Vagina (tissue), 2 donors: ENCODE measurements at regions of chr2 and their contacts with region 1.

Region 1: DNA sequence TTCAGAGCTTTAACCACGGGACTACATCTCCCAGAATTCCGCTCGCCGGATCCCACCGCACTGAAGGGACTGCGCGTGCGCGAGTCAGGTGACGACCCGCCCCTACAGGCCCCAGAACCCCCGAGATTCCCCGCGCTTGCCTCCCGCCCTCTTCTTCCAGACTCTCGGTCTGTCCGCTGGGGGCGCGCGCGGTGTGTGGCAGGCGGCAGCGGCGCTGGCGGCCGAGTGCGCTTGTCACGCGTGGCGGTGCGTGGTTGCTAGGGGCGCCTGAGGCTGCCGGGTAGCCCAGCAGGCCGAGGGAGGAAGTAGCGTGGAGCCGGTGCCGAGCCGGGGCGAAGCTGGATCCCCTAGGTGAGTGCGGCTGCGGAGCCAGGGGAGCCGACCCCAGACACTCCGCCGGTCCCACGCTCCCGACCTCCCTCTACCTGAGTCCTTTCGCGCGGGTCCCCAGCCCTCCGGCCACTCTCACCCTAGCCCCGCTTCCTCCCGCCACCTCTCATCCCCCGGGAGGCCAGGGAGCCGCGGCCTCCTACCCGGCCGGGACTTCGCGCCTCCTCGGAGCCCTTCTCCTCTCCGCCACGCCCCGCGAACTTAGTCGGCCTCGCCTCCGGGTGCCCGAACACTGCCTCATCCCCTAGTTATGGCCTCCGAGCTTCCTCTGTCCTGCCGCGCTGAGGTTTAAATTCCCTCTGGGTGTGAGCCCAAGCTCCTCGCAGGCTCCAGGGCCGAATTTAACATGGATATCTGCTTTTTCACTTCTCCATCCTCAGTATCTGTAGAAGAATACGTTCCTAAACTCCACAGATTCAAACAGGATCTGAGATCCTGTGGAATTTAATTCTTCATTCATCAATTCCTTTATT is at the start of gene TTLL4:
- DNase-seq: peak; percentile 96 to 98
- H3K4me3 ChIP-seq: peak within 1 kb of the TSS; percentile 78 to 96
- H3K27ac ChIP-seq: peak within 1 kb of the TSS; percentile 97
- H3K4me1 ChIP-seq: peaks cover 29% of the 10 kb centered on the region
- H3K27me3 ChIP-seq: no peaks in the 10 kb centered on the region
- CTCF ChIP-seq: peak; percentile 61 to 90 (median 84)
- POLR2A ChIP-seq: peak in 1 of 2 donors; percentile 76
- total RNA-seq, gene TTLL4: 23.3 TPM

Region 2: GRCh38 chr2:218849721-218850120 is 138.8 kb after region 1 on chr2:
- intact Hi-C with region 1: loop called (anchors 5 kb)
- DNase-seq: no peak
- H3K4me3 ChIP-seq: no peak overlapping the region
- H3K27ac ChIP-seq: no peak overlapping the region
- H3K4me1 ChIP-seq: peaks cover 5% of the 10 kb centered on the region
- H3K27me3 ChIP-seq: no peaks in the 10 kb centered on the region
- CTCF ChIP-seq: no peak
- POLR2A ChIP-seq: no peak